ENCODE measurements at regions of chr19 and their contacts with region 1.

Region 1: GRCh38 chr19:49468746-49469447 is 5.1 kb upstream of the FLT3LG start:
- DNase-seq: peak; percentile 66 to 96 (median 88)
- ATAC-seq: peak; percentile 80 to 83 (median 81)
- H3K4me3 ChIP-seq: peak overlapping the region; percentile 13 to 25
- H3K4me3 Mint-ChIP-seq: peak overlapping the region; percentile 75 to 84 (median 76)
- H3K27ac ChIP-seq: peak overlapping the region; percentile 98
- H3K27ac Mint-ChIP-seq: peak overlapping the region; percentile 100
- H3K4me1 ChIP-seq: peaks cover 41 to 86% of the 10 kb centered on the region in 2 experiments
- H3K4me1 Mint-ChIP-seq: peaks cover 41 to 59% (median 46%) of the 10 kb centered on the region in 3 donors
- H3K27me3 ChIP-seq: no peaks in the 10 kb centered on the region
- H3K27me3 Mint-ChIP-seq: no peaks in the 10 kb centered on the region

Region 2: GRCh38 chr19:49391581-49392399 is 77.1 kb before region 1 on chr19:
- CTCF ChIA-PET with region 1: interaction called, 3 to 11 read pairs
- POLR2A ChIA-PET with region 1: no interaction called
- DNase-seq: peak; percentile 56 to 88 (median 71)
- ATAC-seq: peak; percentile 75 to 84 (median 80)
- H3K4me3 ChIP-seq: no peak overlapping the region
- H3K4me3 Mint-ChIP-seq: no peak overlapping the region
- H3K27ac ChIP-seq: peak overlapping the region; percentile 50
- H3K27ac Mint-ChIP-seq: peak overlapping the region; percentile 41 to 59
- H3K4me1 ChIP-seq: peaks cover 2 to 23% of the 10 kb centered on the region in 2 experiments
- H3K4me1 Mint-ChIP-seq: peaks cover 16 to 24% (median 19%) of the 10 kb centered on the region in 3 donors
- H3K27me3 ChIP-seq: peaks cover 0 to 12% of the 10 kb centered on the region in 2 experiments
- H3K27me3 Mint-ChIP-seq: peaks cover 0 to 1% of the 10 kb centered on the region in 2 donors

Region 3: GRCh38 chr19:49453013-49453756 is 15.7 kb before region 1 on chr19 and contains the start of gene ALDH16A1:
- CTCF ChIA-PET with region 1: interaction called, 4 to 12 read pairs
- POLR2A ChIA-PET with region 1: interaction called, 7 to 11 read pairs
- DNase-seq: peak; percentile 95 to 98 (median 97)
- ATAC-seq: peak; percentile 86 to 92 (median 88)
- H3K4me3 ChIP-seq: peak within 1 kb of the TSS; percentile 99
- H3K4me3 Mint-ChIP-seq: peak within 1 kb of the TSS; percentile 95 to 98 (median 98)
- H3K27ac ChIP-seq: peak within 1 kb of the TSS; percentile 83
- H3K27ac Mint-ChIP-seq: peak within 1 kb of the TSS; percentile 98 to 99
- H3K4me1 ChIP-seq: peaks cover 7 to 64% of the 10 kb centered on the region in 2 experiments
- H3K4me1 Mint-ChIP-seq: peaks cover 52 to 68% (median 56%) of the 10 kb centered on the region in 3 donors
- H3K27me3 ChIP-seq: no peaks in the 10 kb centered on the region
- H3K27me3 Mint-ChIP-seq: no peaks in the 10 kb centered on the region
- total RNA-seq, gene ALDH16A1: 32.8 to 57.2 (median 46.3) TPM

Region 4: DNA sequence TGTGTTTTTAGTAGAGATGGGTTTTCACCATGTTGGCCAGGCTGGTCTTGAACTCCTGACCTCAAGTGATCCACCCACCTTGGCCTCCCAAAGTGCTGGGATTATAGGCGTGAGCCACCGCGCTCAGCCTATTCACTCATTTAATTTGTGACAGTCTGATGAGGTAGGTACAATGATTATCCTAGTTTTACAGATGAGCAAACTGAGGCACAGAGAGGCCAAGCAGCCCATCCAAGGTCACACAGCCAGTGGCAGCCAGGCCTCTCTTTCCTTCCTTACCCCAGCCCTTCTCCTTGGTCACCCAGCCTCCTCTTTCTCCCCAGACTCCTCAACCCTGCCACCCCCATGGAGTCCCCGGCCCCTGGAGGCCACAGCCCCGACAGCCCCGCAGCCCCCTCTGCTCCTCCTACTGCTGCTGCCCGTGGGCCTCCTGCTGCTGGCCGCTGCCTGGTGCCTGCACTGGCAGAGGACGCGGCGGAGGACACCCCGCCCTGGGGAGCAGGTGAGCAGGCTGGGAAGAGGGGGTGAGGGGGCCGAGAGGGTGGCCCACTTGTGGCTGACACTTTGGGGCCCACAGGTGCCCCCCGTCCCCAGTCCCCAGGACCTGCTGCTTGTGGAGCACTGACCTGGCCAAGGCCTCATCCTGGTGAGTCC is 11.2 kb after region 1 on chr19:
- CTCF ChIA-PET with region 1: interaction called, 4 to 10 read pairs
- POLR2A ChIA-PET with region 1: interaction called in 1 of 2 experiments, 3 read pairs
- DNase-seq: peak in 1 of 35 experiments; percentile 1
- ATAC-seq: no peak
- H3K4me3 ChIP-seq: no peak overlapping the region
- H3K4me3 Mint-ChIP-seq: peak overlapping the region in 1 of 3 donors; percentile 69
- H3K27ac ChIP-seq: no peak overlapping the region
- H3K27ac Mint-ChIP-seq: peak overlapping the region; percentile 65 to 66
- H3K4me1 ChIP-seq: peaks cover 8 to 55% of the 10 kb centered on the region in 2 experiments
- H3K4me1 Mint-ChIP-seq: peaks cover 25 to 44% (median 34%) of the 10 kb centered on the region in 3 donors
- H3K27me3 ChIP-seq: no peaks in the 10 kb centered on the region
- H3K27me3 Mint-ChIP-seq: no peaks in the 10 kb centered on the region

Measured in T-cell (primary cell).